ENCODE measurements at regions of chr18 and their contacts with region 1.

Region 1: GRCh38 chr18:67104700-67105284 is 411.7 kb downstream of the DSEL start:
- H3K4me3 ChIP-seq: no peak overlapping the region
- H3K27ac ChIP-seq: no peak overlapping the region
- H3K4me1 ChIP-seq: no peaks in the 10 kb centered on the region
- CTCF ChIP-seq: peak; percentile 43; the same call in 1 of the 2 replicates

Region 2: DNA sequence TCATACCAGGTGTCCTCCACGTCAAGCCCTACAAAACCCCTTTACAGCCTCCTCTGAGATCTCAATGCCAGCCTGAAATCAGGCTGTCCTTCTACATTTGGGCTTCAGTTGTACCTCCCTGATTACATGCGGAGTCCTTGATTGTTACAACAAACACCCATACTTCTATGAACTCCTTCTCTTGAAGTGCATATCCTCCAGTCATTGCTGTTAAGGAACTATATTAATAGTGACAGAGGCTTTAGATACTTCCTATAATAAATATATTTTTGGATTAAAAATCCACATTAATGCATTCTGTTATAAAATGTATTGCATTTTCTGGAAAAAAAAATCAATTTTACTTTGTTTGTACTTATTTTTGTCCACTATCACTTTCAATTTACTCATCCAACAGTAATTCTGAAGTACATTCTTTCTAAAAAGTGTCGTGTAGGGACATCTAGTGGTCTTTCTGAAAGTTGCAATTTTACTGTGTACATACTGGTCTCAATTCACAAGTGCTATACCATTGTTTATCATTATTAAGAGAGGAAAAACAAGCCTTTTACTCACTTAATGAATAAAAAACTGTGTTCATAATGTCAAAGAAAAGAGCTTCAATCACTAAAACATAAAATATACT is 95.3 kb after region 1 on chr18:
- CTCF ChIA-PET with region 1: interaction called, 85 read pairs
- POLR2A ChIA-PET with region 1: no interaction called
- H3K4me3 ChIP-seq: no peak overlapping the region
- H3K27ac ChIP-seq: no peak overlapping the region
- H3K4me1 ChIP-seq: no peaks in the 10 kb centered on the region
- CTCF ChIP-seq: no peak

Measured in HEK293 (cell line).